Activated CD4-positive, alpha-beta T cell treated with anti-CD3 and anti-CD28 coated beads for 36 hours (primary cell): ENCODE measurements at regions of chr13 and their contacts with region 1.

Region 1: GRCh38 chr13:113393563-113394338 is 29.8 kb upstream of the GRTP1 start:
- DNase-seq: peak; percentile 92
- ATAC-seq: peak; percentile 94
- H3K4me3 Mint-ChIP-seq: peak overlapping the region; percentile 91
- H3K27ac Mint-ChIP-seq: peak overlapping the region; percentile 85
- H3K4me1 Mint-ChIP-seq: peaks cover 4% of the 10 kb centered on the region
- H3K27me3 Mint-ChIP-seq: no peaks in the 10 kb centered on the region

Region 2: DNA sequence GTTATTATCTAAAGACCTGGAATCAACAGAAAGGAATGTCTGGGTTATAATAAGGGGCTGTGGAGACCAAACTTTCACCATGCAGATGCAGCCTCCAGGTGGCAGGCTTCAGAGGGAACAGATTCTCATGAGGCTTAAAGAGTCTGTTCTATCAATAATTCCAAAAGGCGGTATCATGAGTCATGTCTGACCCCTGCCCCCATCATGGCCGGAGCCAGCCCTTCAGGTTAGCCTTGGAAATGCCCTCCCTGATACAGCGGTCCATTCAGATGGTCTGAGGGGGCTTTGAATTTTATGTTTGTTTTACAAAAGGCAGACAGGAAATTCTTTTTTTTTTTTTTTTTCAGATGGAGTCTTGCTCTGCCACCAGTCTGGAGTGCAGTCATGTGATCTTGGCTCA is 118.4 kb before region 1 on chr13:
- CTCF ChIA-PET with region 1: interaction called, 6 read pairs
- POLR2A ChIA-PET with region 1: no interaction called
- intact Hi-C with region 1: loop called (anchors 1 kb)
- DNase-seq: peak; percentile 65
- ATAC-seq: peak; percentile 85
- H3K4me3 Mint-ChIP-seq: no peak overlapping the region
- H3K27ac Mint-ChIP-seq: no peak overlapping the region
- H3K4me1 Mint-ChIP-seq: peaks cover 2% of the 10 kb centered on the region
- H3K27me3 Mint-ChIP-seq: peaks cover 8% of the 10 kb centered on the region

Region 3: DNA sequence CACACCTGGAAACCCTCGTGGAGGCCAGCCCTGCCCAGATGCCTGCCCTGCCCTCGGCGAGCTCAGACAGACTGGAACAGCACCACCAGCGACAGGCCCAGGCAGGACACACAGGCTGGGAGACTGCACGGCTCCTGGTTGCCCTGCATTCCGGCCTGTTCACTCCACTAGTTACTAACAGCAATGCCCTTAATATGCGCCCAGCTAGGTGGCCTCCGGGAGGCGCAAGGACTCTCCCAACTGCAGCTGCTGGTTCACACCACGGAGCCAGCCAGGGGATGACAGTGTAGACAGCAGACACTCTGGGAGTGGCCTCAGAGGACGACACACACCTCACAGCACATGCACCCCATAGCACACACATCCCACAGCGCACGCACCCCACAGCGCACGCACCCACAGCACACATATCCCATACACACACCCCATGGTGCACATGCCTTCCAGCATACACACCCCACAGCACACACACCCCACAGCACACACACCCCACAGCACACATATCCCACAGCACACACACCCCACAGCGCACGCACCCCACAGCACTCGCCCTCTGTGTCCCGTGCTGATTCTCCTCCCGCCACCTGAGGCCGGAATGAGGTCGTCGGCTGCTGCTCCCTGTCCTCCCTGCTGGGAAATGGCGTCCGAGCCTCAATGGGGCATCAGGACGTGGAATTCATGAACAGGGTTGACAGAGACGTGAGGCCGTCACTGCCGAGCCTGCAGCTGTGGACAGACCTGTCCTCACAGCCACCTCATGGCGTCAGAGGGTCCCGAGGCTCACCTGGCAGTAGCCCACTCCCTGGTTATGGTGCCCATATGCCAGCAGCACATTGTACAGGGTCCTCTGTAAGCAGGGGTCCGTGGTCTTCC is 43.5 kb before region 1 on chr13:
- CTCF ChIA-PET with region 1: interaction called, 3 read pairs
- POLR2A ChIA-PET with region 1: no interaction called
- intact Hi-C with region 1: loop called in 1 of 2 experiments (anchors 1 kb)
- DNase-seq: peak; percentile 32
- ATAC-seq: peak; percentile 63
- H3K4me3 Mint-ChIP-seq: no peak overlapping the region
- H3K27ac Mint-ChIP-seq: no peak overlapping the region
- H3K4me1 Mint-ChIP-seq: no peaks in the 10 kb centered on the region
- H3K27me3 Mint-ChIP-seq: peaks cover 2% of the 10 kb centered on the region

Region 4: DNA sequence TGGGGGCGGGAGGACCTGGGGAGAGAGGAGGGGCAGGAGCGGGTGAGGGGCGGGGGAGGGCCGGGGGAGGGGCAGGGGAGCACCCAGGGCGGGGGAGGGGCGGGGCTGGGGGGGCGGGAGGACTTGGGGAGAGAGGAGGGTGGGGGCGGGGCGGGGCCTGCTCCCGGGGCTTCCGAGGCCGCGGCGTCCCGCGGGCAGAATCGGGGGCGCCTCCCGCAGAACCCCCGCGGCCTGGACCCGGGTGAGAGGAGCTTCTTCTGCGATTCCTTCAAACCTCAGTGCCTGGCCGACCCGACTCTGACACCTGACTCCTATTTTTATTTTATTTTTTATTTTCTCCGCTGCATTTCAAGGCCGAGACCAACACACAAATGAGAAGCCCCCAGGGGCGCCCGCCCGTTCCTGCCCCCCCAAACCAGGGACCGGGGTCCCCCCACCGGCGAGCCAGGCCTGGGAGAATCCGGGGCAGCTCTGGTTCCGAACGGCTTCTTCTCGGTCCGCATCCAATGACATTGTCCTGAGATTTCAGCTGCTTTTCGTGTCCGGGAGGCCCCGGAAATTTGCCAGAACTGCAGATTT is 29.4 kb before region 1 on chr13:
- CTCF ChIA-PET with region 1: interaction called, 4 read pairs
- POLR2A ChIA-PET with region 1: no interaction called
- intact Hi-C with region 1: loop called in 1 of 2 experiments (anchors 2 kb)
- DNase-seq: no peak
- ATAC-seq: no peak
- H3K4me3 Mint-ChIP-seq: no peak overlapping the region
- H3K27ac Mint-ChIP-seq: no peak overlapping the region
- H3K4me1 Mint-ChIP-seq: peaks cover 4% of the 10 kb centered on the region
- H3K27me3 Mint-ChIP-seq: peaks cover 18% of the 10 kb centered on the region